Aorta (tissue), 5 donors: ENCODE measurements at regions of chr1 and their contacts with region 1.

Region 1: DNA sequence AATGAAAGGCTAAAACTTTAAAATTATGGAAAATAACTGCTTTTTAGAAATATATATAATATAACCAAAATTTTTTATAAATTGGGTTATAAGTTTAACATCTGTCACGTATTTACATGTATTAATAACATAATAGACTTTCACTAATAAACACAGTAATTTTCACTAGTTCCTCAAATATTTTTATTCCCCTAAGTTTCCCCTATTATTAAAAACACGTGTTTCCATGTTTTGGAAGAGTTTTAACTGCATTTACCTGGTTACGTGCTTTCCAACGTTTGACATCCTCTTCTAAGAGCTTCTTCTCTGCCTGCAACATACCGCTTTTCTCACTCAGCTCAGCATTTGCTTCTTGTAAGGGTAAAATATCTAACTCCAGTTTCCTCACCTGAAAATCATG is 34.3 kb downstream of the TPR start:
- DNase-seq: no peak
- ATAC-seq: no peak
- H3K4me3 ChIP-seq: no peak overlapping the region
- H3K27ac ChIP-seq: no peak overlapping the region
- H3K4me1 ChIP-seq: no peaks in the 10 kb centered on the region
- H3K27me3 ChIP-seq: no peaks in the 10 kb centered on the region

Region 2: GRCh38 chr1:185129708-185130107 is 1211.1 kb before region 1 on chr1:
- intact Hi-C with region 1: loop called in 1 of 2 experiments (anchors 10 kb)
- DNase-seq: no peak
- ATAC-seq: no peak
- H3K4me3 ChIP-seq: no peak overlapping the region
- H3K27ac ChIP-seq: no peak overlapping the region
- H3K4me1 ChIP-seq: no peaks in the 10 kb centered on the region
- H3K27me3 ChIP-seq: no peaks in the 10 kb centered on the region

Region 3: DNA sequence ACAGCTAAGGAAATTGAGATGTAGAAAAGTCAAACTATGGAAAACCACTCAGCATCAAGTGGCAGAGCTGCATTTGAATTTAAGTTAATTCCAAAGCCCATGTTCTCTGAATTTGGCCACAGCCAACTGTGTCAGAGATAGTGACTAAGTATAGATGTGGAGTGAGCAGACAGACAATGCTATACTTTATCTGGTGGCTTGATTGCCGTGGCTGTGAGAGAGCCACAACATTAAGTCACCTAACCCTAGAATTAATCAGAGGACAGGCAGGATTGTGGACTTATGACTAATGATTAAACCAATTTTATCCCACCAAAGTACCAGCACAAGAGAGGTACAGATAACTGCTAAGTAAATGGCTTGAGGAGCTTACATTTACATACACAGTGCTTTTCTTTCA is 175.5 kb before region 1 on chr1:
- intact Hi-C with region 1: no loop called
- DNase-seq: no peak
- ATAC-seq: no peak
- H3K4me3 ChIP-seq: no peak overlapping the region
- H3K27ac ChIP-seq: no peak overlapping the region
- H3K4me1 ChIP-seq: no peaks in the 10 kb centered on the region
- H3K27me3 ChIP-seq: no peaks in the 10 kb centered on the region

Region 4: DNA sequence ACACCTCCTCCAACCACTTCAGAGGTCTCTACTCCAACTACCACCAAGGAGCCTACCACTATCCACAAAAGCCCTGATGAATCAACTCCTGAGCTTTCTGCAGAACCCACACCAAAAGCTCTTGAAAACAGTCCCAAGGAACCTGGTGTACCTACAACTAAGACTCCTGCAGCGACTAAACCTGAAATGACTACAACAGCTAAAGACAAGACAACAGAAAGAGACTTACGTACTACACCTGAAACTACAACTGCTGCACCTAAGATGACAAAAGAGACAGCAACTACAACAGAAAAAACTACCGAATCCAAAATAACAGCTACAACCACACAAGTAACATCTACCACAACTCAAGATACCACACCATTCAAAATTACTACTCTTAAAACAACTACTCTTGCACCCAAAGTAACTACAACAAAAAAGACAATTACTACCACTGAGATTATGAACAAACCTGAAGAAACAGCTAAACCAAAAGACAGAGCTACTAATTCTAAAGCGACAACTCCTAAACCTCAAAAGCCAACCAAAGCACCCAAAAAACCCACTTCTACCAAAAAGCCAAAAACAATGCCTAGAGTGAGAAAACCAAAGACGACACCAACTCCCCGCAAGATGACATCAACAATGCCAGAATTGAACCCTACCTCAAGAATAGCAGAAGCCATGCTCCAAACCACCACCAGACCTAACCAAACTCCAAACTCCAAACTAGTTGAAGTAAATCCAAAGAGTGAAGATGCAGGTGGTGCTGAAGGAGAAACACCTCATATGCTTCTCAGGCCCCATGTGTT is 32.3 kb before region 1 on chr1:
- intact Hi-C with region 1: no loop called
- DNase-seq: no peak
- ATAC-seq: no peak
- H3K4me3 ChIP-seq: no peak overlapping the region
- H3K27ac ChIP-seq: no peak overlapping the region
- H3K4me1 ChIP-seq: no peaks in the 10 kb centered on the region
- H3K27me3 ChIP-seq: no peaks in the 10 kb centered on the region

Region 5: DNA sequence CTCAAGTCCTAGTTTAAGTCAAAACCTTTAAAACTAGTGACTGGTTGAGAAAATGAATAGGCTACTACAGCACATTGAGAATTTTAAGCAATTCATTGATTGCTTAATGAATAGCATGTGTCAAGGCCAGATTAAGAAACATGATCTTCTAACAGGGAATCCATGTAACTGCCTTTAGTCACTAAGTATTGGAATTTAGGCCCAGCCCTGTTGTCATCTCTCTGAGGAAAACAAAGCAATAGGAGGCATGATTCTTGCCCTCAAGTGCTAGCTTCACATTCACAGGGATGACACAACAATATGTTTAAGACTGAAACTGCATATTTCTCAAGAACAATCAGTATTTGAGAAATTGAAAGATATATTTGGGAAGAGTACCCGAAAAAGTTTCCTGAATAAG is 409.5 kb after region 1 on chr1:
- intact Hi-C with region 1: no loop called
- DNase-seq: no peak
- ATAC-seq: no peak
- H3K4me3 ChIP-seq: no peak overlapping the region
- H3K27ac ChIP-seq: no peak overlapping the region
- H3K4me1 ChIP-seq: no peaks in the 10 kb centered on the region
- H3K27me3 ChIP-seq: no peaks in the 10 kb centered on the region